Naive thymus-derived CD4-positive, alpha-beta T cell (primary cell): ENCODE measurements at regions of chr13 and their contacts with region 1.

Region 1: DNA sequence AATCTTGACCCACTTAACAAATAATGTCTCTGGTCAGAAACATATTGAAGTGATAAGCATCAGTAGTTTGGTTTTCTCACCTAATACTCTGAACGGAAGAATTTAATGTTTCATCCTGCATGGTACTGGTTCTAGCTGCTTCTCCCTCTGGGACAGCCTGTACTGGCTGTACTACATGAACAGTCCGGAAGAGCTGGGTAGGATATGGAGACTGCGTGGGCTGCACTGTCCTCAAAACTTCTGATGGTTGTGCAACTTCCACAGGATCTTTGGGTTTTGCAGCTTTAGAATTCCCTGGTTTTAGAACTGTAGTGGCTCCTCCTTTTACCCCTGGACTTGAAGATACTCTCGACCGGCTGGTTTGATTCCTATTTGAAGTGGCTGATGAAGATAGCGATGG is 78.3 kb downstream of the ELF1 start:
- DNase-seq: no peak
- ATAC-seq: no peak
- H3K4me3 ChIP-seq: no peak overlapping the region
- H3K4me3 Mint-ChIP-seq: peak overlapping the region in 1 of 10 donors; percentile 28
- H3K27ac ChIP-seq: no peak overlapping the region
- H3K27ac Mint-ChIP-seq: peak overlapping the region in 8 of 9 donors; percentile 11 to 83 (median 62)
- H3K4me1 ChIP-seq: peaks cover 0 to 3% of the 10 kb centered on the region in 2 donors
- H3K4me1 Mint-ChIP-seq: peaks cover 18 to 69% (median 48%) of the 10 kb centered on the region in 7 donors
- H3K27me3 ChIP-seq: no peaks in the 10 kb centered on the region
- H3K27me3 Mint-ChIP-seq: no peaks in the 10 kb centered on the region

Region 2: GRCh38 chr13:40958656-40959055 is 17.8 kb after region 1 on chr13:
- CTCF ChIA-PET with region 1: interaction called, 3 read pairs
- POLR2A ChIA-PET with region 1: interaction called, 10 read pairs
- intact Hi-C with region 1: loop called in 1 of 2 experiments (anchors 2 kb)
- DNase-seq: no peak
- ATAC-seq: no peak
- H3K4me3 ChIP-seq: no peak overlapping the region
- H3K4me3 Mint-ChIP-seq: peak overlapping the region in 3 of 10 donors; percentile 19 to 43 (median 30)
- H3K27ac ChIP-seq: no peak overlapping the region
- H3K27ac Mint-ChIP-seq: peak overlapping the region in 6 of 9 donors; percentile 0 to 75 (median 52)
- H3K4me1 ChIP-seq: peaks cover 11 to 28% of the 10 kb centered on the region in 2 donors
- H3K4me1 Mint-ChIP-seq: peaks cover 46 to 69% (median 59%) of the 10 kb centered on the region in 7 donors
- H3K27me3 ChIP-seq: no peaks in the 10 kb centered on the region
- H3K27me3 Mint-ChIP-seq: no peaks in the 10 kb centered on the region

Region 3: GRCh38 chr13:41465241-41465847 is 524.5 kb after region 1 on chr13:
- CTCF ChIA-PET with region 1: no interaction called
- POLR2A ChIA-PET with region 1: no interaction called
- intact Hi-C with region 1: no loop called
- DNase-seq: peak; percentile 63 to 90 (median 89)
- ATAC-seq: peak; percentile 72
- H3K4me3 ChIP-seq: peak overlapping the region; percentile 51
- H3K4me3 Mint-ChIP-seq: peak overlapping the region; percentile 89 to 98 (median 94)
- H3K27ac ChIP-seq: peak overlapping the region; percentile 97
- H3K27ac Mint-ChIP-seq: peak overlapping the region; percentile 96 to 100 (median 99)
- H3K4me1 ChIP-seq: peaks cover 64 to 87% of the 10 kb centered on the region in 2 donors
- H3K4me1 Mint-ChIP-seq: peaks cover 64 to 98% (median 93%) of the 10 kb centered on the region in 7 donors
- H3K27me3 ChIP-seq: no peaks in the 10 kb centered on the region
- H3K27me3 Mint-ChIP-seq: no peaks in the 10 kb centered on the region